CD14-positive monocyte (primary cell): ENCODE measurements at regions of chr20 and their contacts with region 1.

Region 1: DNA sequence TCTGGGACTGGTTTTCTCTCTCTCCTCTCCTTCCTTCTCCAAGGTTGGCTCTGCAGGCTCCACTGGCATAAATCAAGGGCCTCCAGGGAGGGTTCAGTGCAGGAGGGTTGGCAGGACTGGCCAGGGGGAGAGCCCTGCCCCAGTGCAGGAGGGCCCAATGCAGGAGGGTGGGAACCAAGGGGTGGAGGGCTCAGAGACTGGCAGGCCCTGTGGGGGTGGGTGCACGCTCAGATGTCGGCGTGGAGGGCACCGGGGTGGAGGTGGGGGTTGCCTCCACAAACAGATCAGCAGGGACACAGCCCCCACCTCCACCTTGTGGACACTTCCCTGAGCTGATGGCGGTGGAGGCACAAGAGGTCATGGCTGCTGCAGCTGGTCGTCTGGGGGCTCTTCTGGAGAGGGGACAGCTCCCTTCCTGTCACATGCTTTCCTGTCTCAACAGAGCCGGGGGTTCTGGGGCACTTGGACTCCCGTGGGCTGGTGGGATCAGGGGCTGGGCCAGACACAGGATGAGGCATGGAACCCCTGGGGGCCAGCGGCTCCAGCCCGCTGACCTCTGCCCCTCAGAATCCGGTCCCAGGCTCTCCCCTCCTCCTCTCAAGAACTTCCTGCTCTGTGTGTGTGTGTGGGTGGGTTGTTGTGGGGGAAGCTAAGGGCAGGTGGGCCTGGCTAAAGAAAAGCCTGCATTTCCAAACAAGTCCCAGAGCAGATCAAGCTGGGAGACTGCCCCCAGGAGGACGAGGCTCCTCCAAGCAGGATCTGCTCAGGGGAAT is 2.7 kb upstream of the ABHD16B start:
- DNase-seq: no peak
- H3K4me3 ChIP-seq: peak overlapping the region in 1 of 3 experiments; percentile 6
- H3K4me3 Mint-ChIP-seq: peak overlapping the region; percentile 62 to 76
- H3K27ac ChIP-seq: no peak overlapping the region
- H3K27ac Mint-ChIP-seq: peak overlapping the region in 2 of 7 donors; percentile 26 to 48
- H3K4me1 ChIP-seq: peaks cover 79 to 83% of the 10 kb centered on the region in 2 donors
- H3K4me1 Mint-ChIP-seq: peaks cover 58% of the 10 kb centered on the region
- H3K27me3 ChIP-seq: peaks cover 0 to 12% of the 10 kb centered on the region in 2 donors
- H3K27me3 Mint-ChIP-seq: peaks cover 9 to 50% (median 30%) of the 10 kb centered on the region in 3 donors
- CTCF ChIP-seq: no peak

Region 2: DNA sequence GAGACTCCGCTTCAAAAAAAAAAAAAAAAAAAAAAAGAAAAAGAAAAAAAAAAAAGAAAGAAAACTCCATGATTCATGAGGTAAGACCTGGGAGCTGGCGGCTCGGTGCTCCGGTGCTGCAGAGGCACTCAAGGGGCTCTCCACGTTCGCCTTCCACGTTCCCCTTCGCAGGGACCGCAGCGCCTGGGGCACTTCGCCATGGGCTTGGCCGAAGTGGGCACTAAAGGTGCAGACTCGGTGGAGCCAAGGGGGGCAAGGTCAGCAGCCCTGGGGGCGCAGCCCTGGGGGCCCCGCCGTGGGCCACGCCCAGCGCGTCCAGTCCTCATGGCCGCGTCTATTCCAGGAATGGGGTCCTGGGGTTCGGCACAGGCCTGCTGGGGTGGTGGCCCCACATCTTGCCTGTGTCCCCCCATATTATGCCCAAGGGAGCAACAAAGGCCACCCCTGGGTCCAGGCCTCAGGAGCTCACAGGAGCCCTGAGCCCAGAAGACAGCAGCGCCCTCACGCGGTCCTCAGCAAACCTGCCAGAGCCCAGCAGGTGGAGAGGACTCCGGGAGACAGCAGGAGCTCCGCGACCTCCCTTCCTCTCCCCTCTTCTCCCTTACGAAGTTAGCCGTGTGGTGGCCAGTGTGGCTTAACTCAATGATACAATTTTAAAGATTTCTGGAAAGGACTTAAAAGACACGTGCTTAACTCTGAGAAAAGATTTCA is 49.5 kb before region 1 on chr20:
- intact Hi-C with region 1: loop called in 1 of 2 experiments (anchors 10 kb)
- DNase-seq: no peak
- H3K4me3 ChIP-seq: no peak overlapping the region
- H3K4me3 Mint-ChIP-seq: no peak overlapping the region
- H3K27ac ChIP-seq: no peak overlapping the region
- H3K27ac Mint-ChIP-seq: peak overlapping the region in 1 of 7 donors; percentile 8
- H3K4me1 ChIP-seq: peaks cover 3 to 4% of the 10 kb centered on the region in 2 donors
- H3K4me1 Mint-ChIP-seq: peaks cover 5% of the 10 kb centered on the region
- H3K27me3 ChIP-seq: no peaks in the 10 kb centered on the region
- H3K27me3 Mint-ChIP-seq: peaks cover 2 to 3% (median 2%) of the 10 kb centered on the region in 3 donors
- CTCF ChIP-seq: no peak

Region 3: GRCh38 chr20:63846128-63846798 is 12.3 kb before region 1 on chr20:
- intact Hi-C with region 1: loop called in 1 of 2 experiments (anchors 2 kb)
- DNase-seq: no peak
- H3K4me3 ChIP-seq: peak overlapping the region in 1 of 3 experiments; percentile 14
- H3K4me3 Mint-ChIP-seq: peak overlapping the region; percentile 16 to 81
- H3K27ac ChIP-seq: no peak overlapping the region
- H3K27ac Mint-ChIP-seq: no peak overlapping the region
- H3K4me1 ChIP-seq: peaks cover 42 to 43% of the 10 kb centered on the region in 2 donors
- H3K4me1 Mint-ChIP-seq: peaks cover 24% of the 10 kb centered on the region
- H3K27me3 ChIP-seq: peaks cover 19 to 65% of the 10 kb centered on the region in 2 donors
- H3K27me3 Mint-ChIP-seq: peaks cover 17 to 52% (median 36%) of the 10 kb centered on the region in 3 donors
- CTCF ChIP-seq: no peak